ENCODE measurements at regions of chr9 and their contacts with region 1.

Region 1: GRCh38 chr9:32968101-32969011 is 33.1 kb downstream of the APTX start:
- DNase-seq: peak; percentile 72
- H3K4me3 ChIP-seq: no peak overlapping the region
- H3K27ac ChIP-seq: no peak overlapping the region
- H3K4me1 ChIP-seq: peaks cover 6% of the 10 kb centered on the region
- H3K27me3 ChIP-seq: no peaks in the 10 kb centered on the region
- CTCF ChIP-seq: peak; percentile 50 to 63
- POLR2A ChIP-seq: no peak

Region 2: GRCh38 chr9:32571969-32572899 is 396.1 kb before region 1 on chr9:
- CTCF ChIA-PET with region 1: interaction called, 15 read pairs
- POLR2A ChIA-PET with region 1: no interaction called
- dilution Hi-C with region 1: no loop called
- intact Hi-C with region 1: no loop called
- DNase-seq: peak; percentile 88
- H3K4me3 ChIP-seq: peak overlapping the region; percentile 78 to 89 (median 88)
- H3K27ac ChIP-seq: peak overlapping the region; percentile 19
- H3K4me1 ChIP-seq: peaks cover 18% of the 10 kb centered on the region
- H3K27me3 ChIP-seq: peaks cover 0 to 4% of the 10 kb centered on the region in 2 experiments
- CTCF ChIP-seq: peak; percentile 74 to 80
- POLR2A ChIP-seq: no peak

Region 3: GRCh38 chr9:32589083-32589723 is 379.2 kb before region 1 on chr9:
- CTCF ChIA-PET with region 1: interaction called, 705 read pairs
- POLR2A ChIA-PET with region 1: no interaction called
- dilution Hi-C with region 1: no loop called
- intact Hi-C with region 1: loop called (anchors 1 kb)
- DNase-seq: peak; percentile 66
- H3K4me3 ChIP-seq: no peak overlapping the region
- H3K27ac ChIP-seq: no peak overlapping the region
- H3K4me1 ChIP-seq: no peaks in the 10 kb centered on the region
- H3K27me3 ChIP-seq: peaks cover 4 to 18% of the 10 kb centered on the region in 2 experiments
- CTCF ChIP-seq: peak; percentile 12 to 45
- POLR2A ChIP-seq: no peak

Region 4: DNA sequence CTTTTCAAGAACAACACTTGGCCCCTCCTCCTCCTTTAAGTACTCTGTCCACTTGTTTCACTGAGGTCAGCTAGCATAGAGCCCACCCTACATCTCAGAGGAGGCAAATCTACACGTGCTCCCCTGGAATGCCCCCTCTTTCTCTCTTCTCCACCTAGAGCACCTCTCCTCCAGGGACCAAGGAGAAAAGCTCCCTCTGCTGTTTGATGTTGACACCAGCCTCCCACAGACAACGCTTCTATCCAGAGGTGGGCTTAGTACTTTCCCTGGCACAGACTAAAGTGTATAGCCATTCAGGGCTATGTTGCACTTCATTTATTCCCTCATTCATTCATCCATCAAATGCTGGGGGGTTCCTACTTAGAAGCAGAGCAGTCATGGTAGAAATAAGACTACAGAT is 264.7 kb before region 1 on chr9:
- CTCF ChIA-PET with region 1: interaction called, 10 read pairs
- POLR2A ChIA-PET with region 1: no interaction called
- dilution Hi-C with region 1: no loop called
- intact Hi-C with region 1: loop called (anchors 1 kb)
- DNase-seq: peak; percentile 9
- H3K4me3 ChIP-seq: no peak overlapping the region
- H3K27ac ChIP-seq: no peak overlapping the region
- H3K4me1 ChIP-seq: no peaks in the 10 kb centered on the region
- H3K27me3 ChIP-seq: no peaks in the 10 kb centered on the region
- CTCF ChIP-seq: peak in 1 of 2 donors; percentile 31
- POLR2A ChIP-seq: no peak

Region 5: DNA sequence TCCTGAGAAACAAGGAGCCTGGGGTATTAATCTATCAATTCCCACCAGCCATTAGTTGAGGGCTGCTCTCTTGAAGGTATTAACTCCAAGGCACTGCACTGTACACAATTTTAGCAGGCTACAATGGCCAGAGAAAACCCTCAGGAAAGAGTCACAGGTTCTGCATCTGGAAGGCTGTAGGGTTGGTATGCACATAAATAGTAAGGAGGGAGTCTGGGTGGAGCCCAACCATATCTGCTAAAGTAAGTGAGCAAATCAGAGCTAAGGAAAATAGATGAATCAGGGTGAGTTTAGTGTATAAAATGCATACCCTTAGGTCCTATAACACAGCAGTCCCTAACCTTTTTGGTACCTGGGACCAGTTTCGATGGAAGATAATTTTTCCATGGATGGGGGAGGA is 166.8 kb before region 1 on chr9:
- CTCF ChIA-PET with region 1: interaction called, 4 read pairs
- POLR2A ChIA-PET with region 1: no interaction called
- dilution Hi-C with region 1: no loop called
- intact Hi-C with region 1: loop called (anchors 10 kb)
- DNase-seq: no peak
- H3K4me3 ChIP-seq: no peak overlapping the region
- H3K27ac ChIP-seq: no peak overlapping the region
- H3K4me1 ChIP-seq: no peaks in the 10 kb centered on the region
- H3K27me3 ChIP-seq: no peaks in the 10 kb centered on the region
- CTCF ChIP-seq: no peak
- POLR2A ChIP-seq: no peak

Region 6: GRCh38 chr9:32954642-32955041 is 13.7 kb before region 1 on chr9:
- CTCF ChIA-PET with region 1: interaction called, 16 read pairs
- POLR2A ChIA-PET with region 1: no interaction called
- dilution Hi-C with region 1: no loop called
- intact Hi-C with region 1: no loop called
- DNase-seq: peak; percentile 93
- H3K4me3 ChIP-seq: no peak overlapping the region
- H3K27ac ChIP-seq: no peak overlapping the region
- H3K4me1 ChIP-seq: no peaks in the 10 kb centered on the region
- H3K27me3 ChIP-seq: no peaks in the 10 kb centered on the region
- CTCF ChIP-seq: no peak
- POLR2A ChIP-seq: no peak

Region 7: DNA sequence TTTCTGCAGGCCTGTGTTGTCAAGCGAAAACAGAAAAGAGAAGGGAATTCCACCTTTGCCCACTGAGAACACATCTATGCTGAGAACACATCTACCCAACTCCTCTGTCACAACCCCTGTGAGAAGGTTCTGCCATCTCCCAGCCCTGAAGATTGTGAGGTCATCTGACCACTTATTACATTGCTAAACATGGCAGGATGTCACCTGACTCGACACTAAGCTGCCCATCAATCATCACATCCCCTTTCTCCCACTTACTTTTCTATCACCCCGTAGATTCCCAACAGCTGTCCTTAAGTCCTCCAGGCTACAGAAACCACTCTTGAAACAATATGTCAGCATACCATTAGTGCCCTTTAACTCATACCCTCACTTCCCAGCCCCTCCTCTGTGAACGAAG is 762.8 kb after region 1 on chr9:
- CTCF ChIA-PET with region 1: no interaction called
- POLR2A ChIA-PET with region 1: no interaction called
- dilution Hi-C with region 1: no loop called
- intact Hi-C with region 1: no loop called
- DNase-seq: no peak
- H3K4me3 ChIP-seq: no peak overlapping the region
- H3K27ac ChIP-seq: no peak overlapping the region
- H3K4me1 ChIP-seq: no peaks in the 10 kb centered on the region
- H3K27me3 ChIP-seq: peaks cover 1 to 5% of the 10 kb centered on the region in 2 experiments
- CTCF ChIP-seq: no peak
- POLR2A ChIP-seq: no peak

Measured in endothelial cell of umbilical vein (primary cell).